ENCODE measurements at regions of chr18 and their contacts with region 1.

Region 1: GRCh38 chr18:54357660-54358494 is at the starts of genes C18orf54 and STARD6:
- DNase-seq: peak; percentile 89 to 98
- ATAC-seq: peak; percentile 94 to 98 (median 96)
- H3K4me3 ChIP-seq: peak within 1 kb of the TSS; percentile 70
- H3K4me3 Mint-ChIP-seq: peak within 1 kb of the TSS; percentile 100
- H3K27ac ChIP-seq: peak within 1 kb of the TSS; percentile 52
- H3K27ac Mint-ChIP-seq: peak within 1 kb of the TSS; percentile 92
- H3K4me1 ChIP-seq: peaks cover 9% of the 10 kb centered on the region
- H3K4me1 Mint-ChIP-seq: peaks cover 22% of the 10 kb centered on the region in 2 donors
- H3K27me3 ChIP-seq: no peaks in the 10 kb centered on the region
- H3K27me3 Mint-ChIP-seq: no peaks in the 10 kb centered on the region
- CTCF ChIP-seq: peak; percentile 54
- total RNA-seq, gene C18orf54: 1.8 to 3.2 (median 2.0) TPM
- total RNA-seq, gene STARD6: not detected

Region 2: DNA sequence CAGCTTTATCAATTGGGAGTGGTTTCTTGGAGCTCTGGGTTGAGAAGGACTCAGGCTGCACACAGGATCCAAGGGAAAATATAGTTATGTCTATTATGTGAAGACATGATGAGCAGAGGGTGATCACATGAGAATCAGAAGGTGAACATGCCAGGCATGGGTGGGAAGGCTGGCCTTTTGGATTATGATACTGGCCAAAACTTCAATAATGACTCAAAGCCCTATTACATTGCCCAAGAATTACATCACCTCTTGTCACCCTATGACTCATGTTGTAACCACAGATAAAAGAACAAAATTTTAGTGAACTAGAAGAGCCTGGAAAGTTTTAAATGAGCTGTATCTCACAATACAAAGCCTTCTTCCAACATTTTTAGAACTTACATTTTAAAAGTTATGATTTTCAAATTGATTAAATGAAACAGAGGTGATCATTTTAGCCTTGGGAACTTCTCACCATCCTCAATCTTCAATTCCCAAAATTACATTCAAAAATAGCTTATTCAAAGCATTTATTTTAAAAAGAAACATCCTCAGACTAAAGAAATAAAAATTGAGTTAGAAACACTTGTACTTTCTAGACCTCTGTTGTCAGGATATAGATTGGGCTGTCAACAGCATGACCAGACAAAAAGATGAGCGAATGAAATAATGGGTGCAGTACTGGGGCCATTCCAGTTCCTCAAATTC is 561.7 kb before region 1 on chr18:
- intact Hi-C with region 1: no loop called
- DNase-seq: no peak
- ATAC-seq: no peak
- H3K4me3 ChIP-seq: no peak overlapping the region
- H3K4me3 Mint-ChIP-seq: no peak overlapping the region
- H3K27ac ChIP-seq: no peak overlapping the region
- H3K27ac Mint-ChIP-seq: no peak overlapping the region
- H3K4me1 ChIP-seq: no peaks in the 10 kb centered on the region
- H3K4me1 Mint-ChIP-seq: no peaks in the 10 kb centered on the region
- H3K27me3 ChIP-seq: no peaks in the 10 kb centered on the region
- H3K27me3 Mint-ChIP-seq: no peaks in the 10 kb centered on the region
- CTCF ChIP-seq: no peak

Region 3: DNA sequence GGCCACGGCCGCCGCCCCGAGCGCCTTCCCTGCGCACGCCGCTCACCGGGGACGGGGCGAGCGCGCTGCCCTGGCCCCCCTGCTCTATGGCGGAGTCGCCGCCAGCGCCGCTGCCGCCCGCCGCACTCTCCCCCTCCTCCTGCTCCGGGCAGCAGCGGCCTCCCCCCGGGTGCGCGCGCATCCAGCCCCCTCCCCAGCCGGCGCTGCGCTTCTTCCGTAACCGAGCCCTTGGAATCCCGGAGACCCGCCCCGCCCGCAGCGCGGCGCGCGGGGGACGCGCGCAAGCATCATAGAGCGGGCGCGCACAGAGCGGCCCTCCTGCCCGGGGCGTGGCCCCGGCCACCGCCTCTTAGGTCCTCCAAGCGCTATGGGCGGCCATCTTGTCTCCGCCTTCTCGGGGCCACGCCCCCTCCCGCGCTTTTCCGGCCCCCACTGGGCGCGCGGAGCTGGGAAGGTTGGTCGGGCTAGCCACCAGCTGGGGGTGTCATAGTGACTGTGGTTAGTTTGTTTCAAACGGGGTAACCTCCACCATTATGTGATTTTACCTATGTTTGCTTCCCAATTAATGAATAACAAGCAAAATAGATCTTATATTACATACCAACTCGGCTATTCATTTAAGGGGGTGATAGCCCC is 133.4 kb before region 1 on chr18 and contains the start of gene MBD2:
- intact Hi-C with region 1: loop called (anchors 1 kb)
- DNase-seq: peak; percentile 91 to 96
- ATAC-seq: peak; percentile 90 to 98 (median 93)
- H3K4me3 ChIP-seq: peak within 1 kb of the TSS; percentile 47
- H3K4me3 Mint-ChIP-seq: peak within 1 kb of the TSS; percentile 98
- H3K27ac ChIP-seq: peak within 1 kb of the TSS; percentile 66
- H3K27ac Mint-ChIP-seq: peak within 1 kb of the TSS; percentile 87 to 98
- H3K4me1 ChIP-seq: peaks cover 20% of the 10 kb centered on the region
- H3K4me1 Mint-ChIP-seq: peaks cover 37 to 42% of the 10 kb centered on the region in 2 donors
- H3K27me3 ChIP-seq: no peaks in the 10 kb centered on the region
- H3K27me3 Mint-ChIP-seq: no peaks in the 10 kb centered on the region
- CTCF ChIP-seq: no peak
- total RNA-seq, gene MBD2: 74.8 to 107 (median 92.3) TPM

Region 4: GRCh38 chr18:54269893-54270844 is 87.7 kb before region 1 on chr18:
- intact Hi-C with region 1: loop called (anchors 2 kb)
- DNase-seq: peak; percentile 32 to 66
- ATAC-seq: peak; percentile 25 to 47 (median 37)
- H3K4me3 ChIP-seq: peak overlapping the region; percentile 74
- H3K4me3 Mint-ChIP-seq: peak overlapping the region; percentile 96
- H3K27ac ChIP-seq: peak overlapping the region; percentile 90
- H3K27ac Mint-ChIP-seq: peak overlapping the region; percentile 80 to 98
- H3K4me1 ChIP-seq: peaks cover 11% of the 10 kb centered on the region
- H3K4me1 Mint-ChIP-seq: peaks cover 23 to 24% of the 10 kb centered on the region in 2 donors
- H3K27me3 ChIP-seq: no peaks in the 10 kb centered on the region
- H3K27me3 Mint-ChIP-seq: no peaks in the 10 kb centered on the region
- CTCF ChIP-seq: peak; percentile 49

Region 5: DNA sequence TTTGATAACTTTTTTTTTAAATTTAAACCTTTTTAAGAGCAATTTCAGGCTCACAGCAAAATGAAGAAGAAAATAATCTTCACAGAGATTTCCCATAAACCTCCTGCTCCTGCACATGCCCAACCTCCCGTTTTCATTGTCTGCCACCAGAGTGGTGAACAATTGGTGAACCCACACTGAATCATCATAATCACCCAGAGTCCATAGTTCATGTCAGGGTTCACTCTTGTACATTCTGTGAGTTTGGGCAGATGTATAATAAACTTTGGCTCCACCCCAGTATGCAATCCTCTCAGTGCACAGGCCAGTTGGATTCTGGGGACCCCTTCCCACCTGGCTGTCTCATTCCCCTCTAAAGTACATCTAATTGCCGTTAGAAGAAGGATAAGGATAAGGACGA is 24.2 kb after region 1 on chr18:
- intact Hi-C with region 1: no loop called
- DNase-seq: no peak
- ATAC-seq: no peak
- H3K4me3 ChIP-seq: no peak overlapping the region
- H3K4me3 Mint-ChIP-seq: no peak overlapping the region
- H3K27ac ChIP-seq: no peak overlapping the region
- H3K27ac Mint-ChIP-seq: no peak overlapping the region
- H3K4me1 ChIP-seq: no peaks in the 10 kb centered on the region
- H3K4me1 Mint-ChIP-seq: no peaks in the 10 kb centered on the region
- H3K27me3 ChIP-seq: no peaks in the 10 kb centered on the region
- H3K27me3 Mint-ChIP-seq: no peaks in the 10 kb centered on the region
- CTCF ChIP-seq: no peak

Region 6: DNA sequence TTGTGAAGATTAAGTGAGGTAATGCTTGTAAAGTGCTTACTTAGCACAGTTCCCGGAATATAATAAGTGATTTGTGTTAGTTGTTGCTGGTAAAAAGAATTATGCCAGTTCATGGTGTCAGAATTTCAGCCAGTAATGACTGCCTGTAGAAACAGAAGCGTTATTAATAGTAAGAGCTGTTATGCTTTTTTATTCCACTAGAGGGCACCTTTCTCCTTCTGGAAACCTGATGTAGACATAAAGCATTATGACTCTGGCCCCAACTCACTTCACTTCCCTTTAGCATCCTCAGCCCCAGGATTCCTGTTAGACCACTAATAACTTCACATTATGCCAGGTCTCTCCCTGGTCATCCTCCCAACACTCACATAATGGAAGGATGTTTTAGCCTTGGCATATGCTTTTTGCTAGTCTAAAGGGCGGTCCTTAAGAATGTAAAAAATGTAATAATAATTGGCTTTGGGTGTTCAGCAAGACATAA is 34.7 kb after region 1 on chr18:
- intact Hi-C with region 1: loop called (anchors 1 kb)
- DNase-seq: peak in 1 of 2 donors; percentile 75
- ATAC-seq: peak; percentile 66 to 76 (median 71)
- H3K4me3 ChIP-seq: no peak overlapping the region
- H3K4me3 Mint-ChIP-seq: no peak overlapping the region
- H3K27ac ChIP-seq: no peak overlapping the region
- H3K27ac Mint-ChIP-seq: no peak overlapping the region
- H3K4me1 ChIP-seq: peaks cover 5% of the 10 kb centered on the region
- H3K4me1 Mint-ChIP-seq: peaks cover 13% of the 10 kb centered on the region in 2 donors
- H3K27me3 ChIP-seq: no peaks in the 10 kb centered on the region
- H3K27me3 Mint-ChIP-seq: no peaks in the 10 kb centered on the region
- CTCF ChIP-seq: peak; percentile 80

Region 7: DNA sequence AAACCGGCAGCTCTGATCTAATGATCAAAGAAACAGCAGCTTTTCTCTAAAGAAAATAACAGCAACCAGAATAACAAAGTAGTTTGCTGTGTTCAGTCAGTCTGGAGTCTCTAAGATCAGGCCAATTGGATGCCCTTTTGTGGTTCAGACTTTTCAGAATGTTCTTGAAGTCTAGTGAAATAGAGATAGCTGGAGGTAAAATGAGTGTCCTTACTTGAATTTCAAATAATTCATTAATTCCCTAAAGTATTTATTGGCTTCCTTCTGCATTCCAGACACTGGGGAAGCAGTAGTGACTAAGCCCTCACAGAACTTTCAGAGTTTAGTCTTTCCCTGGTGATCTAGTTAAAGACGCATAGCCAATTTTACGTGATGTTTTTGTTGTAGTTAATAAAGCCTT is 58.6 kb after region 1 on chr18:
- intact Hi-C with region 1: loop called (anchors 10 kb)
- DNase-seq: no peak
- ATAC-seq: no peak
- H3K4me3 ChIP-seq: no peak overlapping the region
- H3K4me3 Mint-ChIP-seq: no peak overlapping the region
- H3K27ac ChIP-seq: no peak overlapping the region
- H3K27ac Mint-ChIP-seq: no peak overlapping the region
- H3K4me1 ChIP-seq: no peaks in the 10 kb centered on the region
- H3K4me1 Mint-ChIP-seq: no peaks in the 10 kb centered on the region
- H3K27me3 ChIP-seq: no peaks in the 10 kb centered on the region
- H3K27me3 Mint-ChIP-seq: peaks cover 14 to 18% of the 10 kb centered on the region in 2 donors
- CTCF ChIP-seq: no peak